Mammary epithelial cell (primary cell): ENCODE measurements at regions of chr12 and their contacts with region 1.

Region 1: GRCh38 chr12:14845350-14845750 is 2.0 kb upstream of the ART4 start:
- DNase-seq: peak; percentile 42
- H3K4me3 ChIP-seq: no peak overlapping the region
- H3K27ac ChIP-seq: no peak overlapping the region
- H3K4me1 ChIP-seq: peaks cover 22% of the 10 kb centered on the region
- H3K27me3 ChIP-seq: no peaks in the 10 kb centered on the region
- CTCF ChIP-seq: peak; percentile 74 to 81

Region 2: DNA sequence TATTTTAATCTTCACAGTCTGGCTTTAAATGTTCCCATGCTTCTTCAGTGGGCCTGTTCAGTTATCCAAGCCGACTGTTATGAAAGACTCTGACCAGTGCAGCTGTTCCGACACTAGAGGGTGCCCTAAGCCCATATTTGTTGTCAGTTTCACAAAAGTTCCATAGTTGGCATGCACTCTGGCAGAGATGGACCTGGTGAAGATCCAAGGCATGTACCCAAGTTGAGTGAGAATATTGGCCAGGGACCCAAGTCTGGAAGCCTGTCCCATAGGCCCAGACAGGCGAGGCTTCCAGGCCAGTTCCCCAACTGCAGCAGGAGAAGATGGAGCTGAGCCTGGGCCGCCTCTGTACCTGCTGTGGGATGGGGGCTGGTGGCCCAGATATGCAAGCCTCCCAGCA is 121.6 kb before region 1 on chr12:
- CTCF ChIA-PET with region 1: no interaction called
- dilution Hi-C with region 1: no loop called
- in situ Hi-C with region 1: no loop called
- intact Hi-C with region 1: loop called (anchors 1 kb)
- DNase-seq: peak; percentile 41
- H3K4me3 ChIP-seq: no peak overlapping the region
- H3K27ac ChIP-seq: no peak overlapping the region
- H3K4me1 ChIP-seq: no peaks in the 10 kb centered on the region
- H3K27me3 ChIP-seq: no peaks in the 10 kb centered on the region
- CTCF ChIP-seq: peak; percentile 75 to 78

Region 3: DNA sequence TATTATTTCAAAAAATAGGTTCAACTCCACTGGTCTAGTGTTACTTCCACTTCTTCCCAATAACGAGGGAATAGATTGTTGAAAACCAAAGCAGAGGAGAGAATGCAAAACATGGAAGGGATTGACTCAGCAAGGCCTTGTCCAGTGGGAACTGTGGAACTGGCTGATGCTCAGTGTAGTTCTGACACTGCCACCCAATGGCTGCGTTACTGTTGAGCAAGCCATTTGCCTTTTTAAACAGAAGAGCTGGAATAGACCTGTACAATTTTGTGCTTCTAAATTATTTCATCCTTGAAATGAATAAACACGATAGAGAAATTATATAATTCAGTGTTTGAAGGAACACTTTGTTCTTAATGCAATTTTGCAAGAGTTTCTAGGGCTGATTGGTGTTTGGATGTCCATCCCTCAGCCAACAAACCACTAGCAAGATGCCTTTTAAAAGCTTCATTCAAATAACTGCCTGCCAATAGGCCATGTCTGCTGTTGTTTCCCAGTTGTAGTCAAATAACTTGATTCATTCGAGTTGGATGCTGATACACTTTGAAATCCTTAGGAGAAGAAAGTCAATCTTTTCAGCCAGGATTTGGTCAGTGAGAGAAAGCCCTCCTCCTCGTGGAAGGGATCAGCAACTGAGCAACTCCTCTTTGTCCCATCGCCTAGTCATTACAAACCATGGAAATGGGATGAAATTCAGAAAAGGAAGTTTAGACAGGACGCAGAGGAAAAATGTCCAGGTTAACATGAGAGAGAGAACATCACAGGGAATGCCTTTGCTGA is 47.6 kb after region 1 on chr12:
- CTCF ChIA-PET with region 1: no interaction called
- dilution Hi-C with region 1: no loop called
- in situ Hi-C with region 1: no loop called
- intact Hi-C with region 1: loop called (anchors 5 kb)
- DNase-seq: no peak
- H3K4me3 ChIP-seq: no peak overlapping the region
- H3K27ac ChIP-seq: no peak overlapping the region
- H3K4me1 ChIP-seq: no peaks in the 10 kb centered on the region
- H3K27me3 ChIP-seq: no peaks in the 10 kb centered on the region
- CTCF ChIP-seq: peak in 1 of 2 donors; percentile 33

Region 4: DNA sequence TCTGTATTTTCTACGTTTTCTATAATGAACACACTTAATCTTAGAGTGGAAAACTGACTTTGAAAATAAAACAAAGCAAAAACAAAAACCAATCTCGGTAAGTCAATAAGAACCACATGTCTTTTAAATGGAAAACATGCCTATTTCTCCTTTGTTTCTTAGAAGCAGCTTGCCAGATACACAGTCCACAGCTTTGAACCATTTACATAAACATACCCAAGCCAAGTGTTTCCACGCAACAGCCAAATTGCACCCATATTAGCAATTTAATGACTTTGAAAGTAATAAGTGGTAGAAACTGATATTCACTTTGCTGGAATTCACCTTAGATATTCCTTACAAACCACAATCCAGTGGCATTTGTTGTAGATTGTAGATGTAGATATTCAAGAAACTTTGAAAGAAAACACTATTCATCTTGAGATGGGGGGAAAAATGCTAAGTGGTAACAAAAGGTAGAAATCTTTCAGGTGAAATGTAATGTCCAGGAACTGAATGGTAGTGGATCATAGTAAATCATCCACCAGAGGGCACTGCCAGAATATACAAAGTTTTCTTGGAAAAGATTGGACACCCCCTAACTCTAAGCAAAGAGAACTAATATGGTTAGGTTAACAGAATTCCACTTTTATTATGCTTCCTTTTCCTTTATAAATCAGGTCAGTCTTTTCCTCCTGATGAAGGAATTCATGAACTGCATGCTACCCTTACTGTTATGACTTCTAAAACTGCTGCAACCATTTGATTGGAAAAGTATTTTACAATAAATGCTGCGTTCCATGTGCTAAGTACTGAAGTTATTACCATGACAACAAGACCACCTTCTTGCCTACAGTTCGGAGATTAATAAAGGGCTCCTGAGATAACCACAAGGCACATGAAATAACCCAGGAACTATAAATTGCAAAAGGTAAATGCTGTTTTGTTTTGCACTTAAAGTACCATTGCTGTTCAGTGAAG is 306.1 kb after region 1 on chr12:
- CTCF ChIA-PET with region 1: no interaction called
- dilution Hi-C with region 1: no loop called
- in situ Hi-C with region 1: no loop called
- intact Hi-C with region 1: loop called (anchors 1 kb)
- DNase-seq: no peak
- H3K4me3 ChIP-seq: no peak overlapping the region
- H3K27ac ChIP-seq: no peak overlapping the region
- H3K4me1 ChIP-seq: peaks cover 10% of the 10 kb centered on the region
- H3K27me3 ChIP-seq: no peaks in the 10 kb centered on the region
- CTCF ChIP-seq: peak; percentile 28 to 61

Region 5: GRCh38 chr12:15522565-15523187 is 677.3 kb after region 1 on chr12:
- CTCF ChIA-PET with region 1: no interaction called
- dilution Hi-C with region 1: no loop called
- in situ Hi-C with region 1: no loop called
- intact Hi-C with region 1: loop called (anchors 10 kb)
- DNase-seq: peak; percentile 39
- H3K4me3 ChIP-seq: no peak overlapping the region
- H3K27ac ChIP-seq: no peak overlapping the region
- H3K4me1 ChIP-seq: peaks cover 22% of the 10 kb centered on the region
- H3K27me3 ChIP-seq: no peaks in the 10 kb centered on the region
- CTCF ChIP-seq: peak; percentile 65 to 71